MCF 10A (cell line): ENCODE measurements at regions of chr19 and their contacts with region 1.

Region 1: GRCh38 chr19:907183-907853 is 5.7 kb downstream of the R3HDM4 start:
- DNase-seq: no peak
- H3K4me3 Mint-ChIP-seq: no peak overlapping the region
- H3K27ac Mint-ChIP-seq: no peak overlapping the region
- H3K4me1 Mint-ChIP-seq: peaks cover 9% of the 10 kb centered on the region
- H3K27me3 Mint-ChIP-seq: no peaks in the 10 kb centered on the region
- CTCF ChIP-seq: no peak

Region 2: DNA sequence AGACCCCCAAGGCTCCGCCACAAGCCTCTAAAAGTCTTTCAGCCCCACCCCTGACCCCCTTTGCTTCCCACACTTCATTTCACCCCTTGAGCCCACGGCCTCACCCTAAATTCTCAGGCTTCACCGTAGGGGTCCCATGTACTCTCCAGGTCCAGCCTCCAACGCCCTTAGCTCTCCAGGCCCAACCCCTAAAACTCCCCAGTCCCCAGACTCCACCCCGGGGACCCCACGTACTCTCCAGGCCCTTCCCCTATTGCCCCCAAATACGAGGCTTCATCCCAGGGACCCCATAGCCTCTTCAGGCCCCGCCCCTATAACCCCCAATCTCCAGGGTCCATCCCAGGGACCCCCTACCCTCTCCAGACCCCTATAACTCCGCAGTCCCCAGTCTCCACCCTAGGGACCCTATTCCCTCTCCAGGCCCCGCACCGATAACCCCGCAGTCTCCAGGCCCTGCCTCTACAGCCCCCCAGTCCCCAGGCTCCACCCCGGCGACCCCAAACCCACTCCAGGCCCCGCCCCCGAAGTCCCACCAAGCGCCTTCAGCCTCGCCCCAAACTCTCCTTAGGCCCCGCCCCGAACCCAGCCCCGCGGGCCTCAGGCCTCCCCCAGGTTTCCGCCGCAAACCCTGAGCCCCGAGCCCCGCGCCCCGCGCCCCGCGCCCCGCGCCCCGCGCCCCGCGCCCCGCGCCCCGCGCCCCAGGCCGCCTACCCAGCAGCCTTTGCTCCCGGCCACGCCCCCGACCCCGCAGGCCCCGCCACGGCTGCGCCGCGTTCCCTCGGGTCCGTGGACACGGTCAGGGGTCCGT is 14.9 kb before region 1 on chr19:
- CTCF ChIA-PET with region 1: interaction called, 3 read pairs
- POLR2A ChIA-PET with region 1: interaction called, 14 read pairs
- intact Hi-C with region 1: no loop called
- DNase-seq: no peak
- H3K4me3 Mint-ChIP-seq: peak overlapping the region; percentile 82
- H3K27ac Mint-ChIP-seq: peak overlapping the region; percentile 100
- H3K4me1 Mint-ChIP-seq: peaks cover 7% of the 10 kb centered on the region
- H3K27me3 Mint-ChIP-seq: no peaks in the 10 kb centered on the region
- CTCF ChIP-seq: no peak